GM13976 (cell line): ENCODE measurements at regions of chr1 and their contacts with region 1.

Region 1: GRCh38 chr1:20981915-20982314 is 194.8 kb downstream of the EIF4G3 start:
- DNase-seq: no peak
- CTCF ChIP-seq: peak; percentile 23

Region 2: DNA sequence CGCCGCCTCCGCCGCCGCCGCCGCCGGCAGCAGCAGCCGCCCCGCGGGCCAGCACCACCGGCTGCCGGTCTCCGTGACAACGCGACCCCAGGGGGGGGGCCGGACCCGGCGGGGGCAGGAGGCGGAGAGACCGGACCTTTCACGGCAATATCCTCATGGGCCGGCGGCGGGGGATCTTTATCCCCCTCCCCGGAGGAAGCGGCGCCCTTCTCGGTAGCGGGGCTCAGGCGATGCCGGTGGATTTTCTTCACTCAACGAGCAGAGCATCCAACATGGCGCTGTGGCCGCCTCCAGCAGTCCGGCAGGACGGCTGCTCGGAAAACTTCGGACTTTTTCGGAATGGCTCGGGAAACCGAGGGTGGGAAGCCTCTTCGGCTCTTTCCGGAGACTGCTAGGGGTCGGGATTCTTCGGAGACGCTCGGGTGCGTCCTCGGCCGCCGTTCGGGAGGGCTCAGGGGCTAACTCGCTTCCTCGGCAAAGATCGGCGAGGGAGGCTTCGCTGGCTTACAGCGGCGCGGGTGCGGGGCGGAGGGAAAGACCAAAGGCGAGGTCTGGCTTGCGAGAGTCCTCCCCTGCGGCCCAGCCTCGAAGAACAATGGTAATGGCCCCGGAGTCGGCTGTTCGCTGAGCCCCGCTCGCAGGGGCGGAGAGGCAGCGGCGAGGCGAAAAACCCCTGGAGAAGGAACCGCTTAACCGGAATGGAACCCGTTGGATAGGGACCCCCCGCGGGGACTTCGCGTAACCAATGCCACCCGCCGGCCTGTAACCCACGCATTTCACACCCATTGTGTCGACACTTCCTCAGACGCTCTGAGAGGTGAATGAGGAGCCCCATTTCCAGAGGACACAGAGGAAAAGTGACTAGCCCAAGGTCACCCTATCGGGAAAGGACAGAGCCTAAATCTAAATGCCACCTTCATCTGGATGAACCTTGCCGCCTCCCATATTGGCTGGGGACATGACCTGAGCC is 195.0 kb after region 1 on chr1 and contains the start of gene EIF4G3:
- in situ Hi-C with region 1: loop called (anchors 25 kb)
- DNase-seq: peak; percentile 100
- CTCF ChIP-seq: no peak